ENCODE measurements at regions of chr5 and their contacts with region 1.

Region 1: GRCh38 chr5:145825751-145826180 is 9.4 kb downstream of the PRELID2 start:
- DNase-seq: no peak
- H3K4me3 ChIP-seq: no peak overlapping the region
- H3K27ac ChIP-seq: no peak overlapping the region
- H3K27me3 ChIP-seq: no peaks in the 10 kb centered on the region
- CTCF ChIP-seq: peak; percentile 90

Region 2: DNA sequence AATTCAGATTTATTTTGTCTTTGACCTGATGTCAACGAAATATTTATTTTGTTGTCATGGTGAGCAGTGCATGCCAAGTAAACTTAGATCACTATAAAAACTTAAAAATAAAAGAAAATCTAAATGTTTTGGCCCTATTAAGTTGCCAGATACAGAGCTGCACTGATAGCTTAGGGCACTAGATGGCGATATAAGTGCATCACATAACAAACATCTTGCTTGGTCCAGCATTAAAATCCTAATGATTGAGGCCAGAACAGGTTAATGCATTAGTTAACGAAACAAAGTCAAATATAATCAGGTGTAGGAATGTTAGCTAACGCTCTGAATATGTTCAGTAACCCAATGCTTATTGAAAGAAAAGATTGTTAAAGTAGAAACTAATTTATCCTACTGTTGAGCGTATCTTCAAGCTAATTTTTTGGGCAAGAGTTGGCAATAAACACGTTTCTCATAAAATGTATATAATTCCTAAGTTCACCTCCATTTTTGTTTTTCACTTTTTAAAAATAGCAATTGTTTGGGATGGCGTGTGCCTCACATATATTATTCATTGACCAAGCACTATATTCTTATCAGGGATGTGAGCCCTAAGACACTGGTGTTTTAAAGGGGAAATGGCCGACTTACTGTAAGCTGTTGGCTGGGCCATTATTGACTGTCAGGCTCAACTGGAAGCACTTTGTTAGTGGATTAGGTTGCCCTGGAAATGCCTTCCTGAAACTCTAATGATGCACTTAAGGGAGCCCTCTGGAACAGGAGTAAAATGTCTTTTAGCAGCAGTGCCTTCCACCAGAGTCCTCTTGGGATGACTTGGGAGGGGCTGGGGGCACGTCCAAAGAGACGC is 1621.8 kb before region 1 on chr5:
- CTCF ChIA-PET with region 1: interaction called, 50 read pairs
- POLR2A ChIA-PET with region 1: no interaction called
- DNase-seq: no peak
- H3K4me3 ChIP-seq: no peak overlapping the region
- H3K27ac ChIP-seq: no peak overlapping the region
- H3K27me3 ChIP-seq: peaks cover 10% of the 10 kb centered on the region
- CTCF ChIP-seq: peak; percentile 91

Region 3: GRCh38 chr5:144451187-144451973 is 1374.4 kb before region 1 on chr5:
- CTCF ChIA-PET with region 1: no interaction called
- POLR2A ChIA-PET with region 1: no interaction called
- DNase-seq: no peak
- H3K4me3 ChIP-seq: no peak overlapping the region
- H3K27ac ChIP-seq: no peak overlapping the region
- H3K27me3 ChIP-seq: no peaks in the 10 kb centered on the region
- CTCF ChIP-seq: no peak

Region 4: DNA sequence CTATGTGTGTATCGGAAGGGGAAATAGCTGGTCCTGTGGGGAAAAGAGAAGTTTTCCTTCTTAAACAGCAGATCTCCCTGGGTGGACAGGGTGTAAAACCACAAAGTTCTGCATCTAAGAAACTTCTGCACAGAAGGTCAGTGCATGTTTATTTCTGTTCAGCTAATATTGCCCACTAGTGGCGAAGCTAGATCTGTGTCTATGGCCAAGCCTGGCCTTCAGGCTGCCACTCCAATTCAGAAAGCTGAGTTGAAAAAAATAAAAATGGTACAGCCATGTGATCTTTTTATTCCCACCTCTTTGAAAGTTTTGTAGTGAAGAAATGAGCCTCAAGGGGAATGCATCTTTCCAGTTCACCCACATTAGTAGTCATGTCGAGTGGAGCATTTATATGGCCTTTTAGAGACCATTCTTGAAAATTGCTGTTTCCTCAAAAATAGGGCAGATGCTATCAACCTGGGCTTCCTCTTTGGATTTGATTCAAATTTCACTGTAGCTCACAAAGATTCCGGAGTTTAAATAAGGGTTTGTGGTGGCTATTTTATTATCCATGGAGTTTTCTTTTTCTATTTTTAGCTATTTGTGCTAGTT is 478.6 kb before region 1 on chr5:
- CTCF ChIA-PET with region 1: interaction called, 20 read pairs
- POLR2A ChIA-PET with region 1: no interaction called
- DNase-seq: peak; percentile 13
- H3K4me3 ChIP-seq: no peak overlapping the region
- H3K27ac ChIP-seq: no peak overlapping the region
- H3K27me3 ChIP-seq: no peaks in the 10 kb centered on the region
- CTCF ChIP-seq: peak; percentile 75

Region 5: DNA sequence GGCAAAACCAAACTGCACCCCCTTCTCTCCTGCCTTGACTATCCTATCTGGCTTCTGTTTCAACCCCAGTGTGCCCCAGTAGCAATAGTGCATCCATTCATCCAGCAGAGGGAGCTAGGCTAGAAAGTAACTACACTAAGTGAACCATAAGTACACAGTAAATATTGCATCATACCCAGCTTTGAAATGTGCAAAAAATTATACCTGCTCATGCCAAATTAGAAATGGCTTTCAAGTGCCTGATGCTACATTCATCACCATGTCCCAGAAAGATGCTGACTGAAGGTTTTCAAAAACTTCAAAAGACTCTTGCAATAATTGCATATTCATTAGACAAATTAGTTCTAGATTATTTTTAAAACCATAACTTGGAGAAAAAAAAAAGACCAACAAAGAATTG is 144.1 kb before region 1 on chr5:
- CTCF ChIA-PET with region 1: interaction called, 18 read pairs
- POLR2A ChIA-PET with region 1: no interaction called
- DNase-seq: peak; percentile 20
- H3K4me3 ChIP-seq: no peak overlapping the region
- H3K27ac ChIP-seq: no peak overlapping the region
- H3K27me3 ChIP-seq: no peaks in the 10 kb centered on the region
- CTCF ChIP-seq: peak; percentile 85

Region 6: GRCh38 chr5:145697251-145697990 is 128.3 kb before region 1 on chr5:
- CTCF ChIA-PET with region 1: interaction called, 11 read pairs
- POLR2A ChIA-PET with region 1: no interaction called
- DNase-seq: peak; percentile 1
- H3K4me3 ChIP-seq: no peak overlapping the region
- H3K27ac ChIP-seq: no peak overlapping the region
- H3K27me3 ChIP-seq: no peaks in the 10 kb centered on the region
- CTCF ChIP-seq: peak; percentile 61

Region 7: GRCh38 chr5:145743396-145744061 is 82.2 kb before region 1 on chr5:
- CTCF ChIA-PET with region 1: no interaction called
- POLR2A ChIA-PET with region 1: no interaction called
- DNase-seq: no peak
- H3K4me3 ChIP-seq: no peak overlapping the region
- H3K27ac ChIP-seq: no peak overlapping the region
- H3K27me3 ChIP-seq: no peaks in the 10 kb centered on the region
- CTCF ChIP-seq: no peak

Region 8: DNA sequence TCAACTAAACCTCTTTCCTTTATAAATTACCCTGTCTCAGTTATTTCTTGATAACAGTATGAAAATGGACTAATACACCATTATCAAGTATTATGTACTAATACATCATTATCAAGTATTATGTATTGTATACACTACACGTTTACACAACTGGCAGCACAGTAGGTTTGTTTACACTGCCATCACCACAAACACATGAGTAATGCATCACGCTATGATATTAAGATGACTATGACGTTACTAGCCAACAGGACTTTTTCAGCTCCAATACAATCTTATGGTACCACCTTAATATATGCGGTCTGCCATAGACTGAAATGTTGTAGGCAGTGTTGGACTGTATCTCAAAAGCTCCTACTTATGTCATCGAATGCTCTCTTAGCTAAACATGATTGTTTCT is 18.9 kb before region 1 on chr5:
- CTCF ChIA-PET with region 1: interaction called, 10 read pairs
- POLR2A ChIA-PET with region 1: no interaction called
- DNase-seq: no peak
- H3K4me3 ChIP-seq: no peak overlapping the region
- H3K27ac ChIP-seq: no peak overlapping the region
- H3K27me3 ChIP-seq: no peaks in the 10 kb centered on the region
- CTCF ChIP-seq: no peak

Region 9: GRCh38 chr5:146027751-146028150 is 202.0 kb after region 1 on chr5:
- CTCF ChIA-PET with region 1: no interaction called
- POLR2A ChIA-PET with region 1: no interaction called
- DNase-seq: no peak
- H3K4me3 ChIP-seq: no peak overlapping the region
- H3K27ac ChIP-seq: no peak overlapping the region
- H3K27me3 ChIP-seq: no peaks in the 10 kb centered on the region
- CTCF ChIP-seq: no peak

Region 10: GRCh38 chr5:146049014-146049703 is 223.4 kb after region 1 on chr5:
- CTCF ChIA-PET with region 1: interaction called, 61 read pairs
- POLR2A ChIA-PET with region 1: no interaction called
- DNase-seq: peak; percentile 65
- H3K4me3 ChIP-seq: no peak overlapping the region
- H3K27ac ChIP-seq: no peak overlapping the region
- H3K27me3 ChIP-seq: no peaks in the 10 kb centered on the region
- CTCF ChIP-seq: peak; percentile 86

Region 11: DNA sequence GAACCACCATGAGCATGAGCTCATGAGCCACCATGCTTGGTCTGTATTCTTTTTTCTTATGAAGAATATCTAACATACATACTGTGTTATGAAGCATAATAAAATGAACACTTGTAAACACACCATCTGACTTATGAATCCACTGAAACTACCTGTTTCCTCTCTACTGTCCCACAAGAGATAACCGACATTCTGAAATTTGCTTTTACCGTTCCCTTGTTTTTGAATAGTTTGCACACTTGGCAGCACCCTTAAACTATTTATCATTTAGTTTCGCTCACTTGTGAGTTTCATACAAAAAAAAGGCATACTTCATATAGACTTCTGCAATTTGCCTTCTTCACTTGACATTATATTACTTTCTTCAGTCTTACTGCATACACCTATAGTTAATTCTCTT is 347.8 kb after region 1 on chr5:
- CTCF ChIA-PET with region 1: no interaction called
- POLR2A ChIA-PET with region 1: no interaction called
- DNase-seq: no peak
- H3K4me3 ChIP-seq: no peak overlapping the region
- H3K27ac ChIP-seq: no peak overlapping the region
- H3K27me3 ChIP-seq: no peaks in the 10 kb centered on the region
- CTCF ChIP-seq: no peak